ENCODE measurements at regions of chr2 and their contacts with region 1.

Region 1: GRCh38 chr2:180085144-180085543 is 78.0 kb upstream of the CWC22 start:
- DNase-seq: no peak
- H3K4me3 ChIP-seq: no peak overlapping the region
- CTCF ChIP-seq: no peak

Region 2: DNA sequence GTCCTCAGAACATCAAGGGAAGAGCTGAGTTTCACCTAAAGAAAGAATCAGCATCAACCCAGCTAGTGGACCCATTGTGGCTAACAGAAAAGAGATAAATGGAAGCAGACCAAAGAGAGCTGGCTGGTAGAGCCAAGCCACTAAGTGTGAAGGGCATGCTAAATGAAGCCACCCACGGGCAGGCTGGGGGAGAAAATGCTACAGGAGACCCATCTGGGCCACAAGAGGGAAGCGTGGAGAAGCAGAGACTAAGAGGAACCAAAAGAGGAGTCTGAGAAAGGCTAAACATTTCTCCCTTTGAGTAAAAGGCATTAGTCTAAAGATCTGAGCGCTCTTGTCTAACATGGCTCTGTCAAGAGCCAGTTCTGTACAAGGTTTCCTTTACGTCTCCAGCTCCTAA is 93.8 kb before region 1 on chr2:
- in situ Hi-C with region 1: loop called (anchors 5 kb)
- DNase-seq: no peak
- H3K4me3 ChIP-seq: no peak overlapping the region
- CTCF ChIP-seq: peak; percentile 37

Region 3: DNA sequence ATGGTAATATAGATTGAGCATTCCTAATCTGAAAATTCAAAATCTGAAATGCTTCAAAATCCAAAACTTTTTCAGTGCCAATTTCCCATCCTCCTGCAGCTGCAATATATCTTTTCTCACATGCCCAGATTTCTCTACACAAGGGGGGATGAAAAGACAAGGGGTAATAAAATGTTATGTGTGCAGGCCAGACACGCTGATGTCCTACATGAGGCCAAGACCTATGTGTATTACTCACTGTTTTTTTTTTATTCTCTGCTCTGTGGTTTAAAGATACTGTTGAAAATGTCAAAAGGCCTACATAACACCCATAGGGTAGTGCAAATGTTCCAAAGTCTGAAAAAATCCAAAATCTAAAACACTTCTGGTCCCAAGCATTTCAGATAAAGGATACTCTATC is 36.9 kb before region 1 on chr2:
- in situ Hi-C with region 1: no loop called
- DNase-seq: no peak
- H3K4me3 ChIP-seq: no peak overlapping the region
- CTCF ChIP-seq: no peak

Region 4: DNA sequence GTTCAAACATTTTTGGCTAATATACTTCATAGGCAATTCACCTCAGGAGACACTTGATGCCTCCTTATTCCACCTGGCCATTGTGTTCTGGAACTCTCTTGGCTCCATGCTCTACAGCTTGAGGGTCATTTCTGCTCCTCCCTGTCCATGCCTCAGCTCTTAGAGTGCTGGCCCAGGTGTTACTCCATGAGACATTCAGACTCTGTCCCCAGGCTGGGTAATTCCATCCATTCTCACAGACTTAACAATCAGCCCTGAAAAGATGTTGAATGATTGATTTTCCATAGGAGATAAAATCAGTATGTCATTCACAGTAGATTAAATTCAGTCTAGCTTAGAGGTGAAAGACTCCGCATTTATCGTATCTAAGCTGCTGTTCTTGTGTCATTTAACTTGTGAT is 90.6 kb after region 1 on chr2:
- in situ Hi-C with region 1: no loop called
- DNase-seq: no peak
- H3K4me3 ChIP-seq: no peak overlapping the region
- CTCF ChIP-seq: no peak

Measured in astrocyte of the cerebellum (primary cell).